A673 (cell line): ENCODE measurements at regions of chr11 and their contacts with region 1.

Region 1: DNA sequence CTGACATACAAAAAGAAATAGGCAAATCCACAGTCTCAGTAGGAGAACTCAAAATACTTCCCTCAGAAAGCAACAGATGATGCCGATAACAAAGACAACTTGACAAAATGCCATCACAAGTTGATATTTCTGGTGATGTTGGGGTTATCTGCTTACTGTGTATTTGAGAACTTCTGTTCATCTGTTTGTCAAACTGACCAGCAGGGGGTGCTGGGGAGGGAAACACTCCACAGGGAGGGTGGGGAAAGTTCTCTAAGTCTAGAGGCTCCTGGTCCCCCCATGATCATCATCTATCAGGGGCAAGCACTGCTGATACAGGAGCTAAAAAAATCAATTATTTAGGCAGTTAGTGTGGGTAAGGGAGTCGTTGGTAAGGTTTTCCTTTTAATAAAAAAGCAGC is 19.2 kb downstream of the GLYATL1 start:
- DNase-seq: peak; percentile 63
- H3K4me3 ChIP-seq: no peak overlapping the region
- H3K27ac ChIP-seq: no peak overlapping the region
- H3K4me1 ChIP-seq: no peaks in the 10 kb centered on the region
- H3K27me3 ChIP-seq: peaks cover 14% of the 10 kb centered on the region
- CTCF ChIP-seq: peak; percentile 62

Region 2: GRCh38 chr11:58726737-58727414 is 231.6 kb before region 1 on chr11:
- CTCF ChIA-PET with region 1: no interaction called
- POLR2A ChIA-PET with region 1: no interaction called
- intact Hi-C with region 1: no loop called
- DNase-seq: peak; percentile 35
- H3K4me3 ChIP-seq: no peak overlapping the region
- H3K27ac ChIP-seq: no peak overlapping the region
- H3K4me1 ChIP-seq: peaks cover 10% of the 10 kb centered on the region
- H3K27me3 ChIP-seq: no peaks in the 10 kb centered on the region
- CTCF ChIP-seq: no peak

Region 3: DNA sequence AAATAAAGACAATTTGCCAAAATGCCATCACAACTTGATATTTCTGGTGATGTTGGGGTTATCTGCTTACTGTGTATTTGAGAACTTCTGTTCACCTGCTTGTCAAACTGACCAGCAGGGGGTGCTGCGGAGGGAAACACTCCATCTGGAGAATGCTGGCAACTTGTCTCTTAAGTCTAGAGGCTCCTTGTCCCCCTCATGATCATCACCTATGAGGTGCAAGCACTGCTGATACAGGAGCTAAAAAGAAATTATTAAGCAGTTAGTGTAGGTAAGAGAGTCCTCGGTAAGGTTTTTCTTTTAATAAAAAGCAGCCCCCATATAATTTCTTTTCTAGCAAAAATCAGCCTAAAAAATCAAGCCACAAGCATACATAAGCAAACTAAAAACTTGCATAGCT is 94.9 kb after region 1 on chr11:
- CTCF ChIA-PET with region 1: no interaction called
- POLR2A ChIA-PET with region 1: no interaction called
- intact Hi-C with region 1: loop called (anchors 5 kb)
- DNase-seq: peak; percentile 77
- H3K4me3 ChIP-seq: no peak overlapping the region
- H3K27ac ChIP-seq: no peak overlapping the region
- H3K4me1 ChIP-seq: no peaks in the 10 kb centered on the region
- H3K27me3 ChIP-seq: peaks cover 23% of the 10 kb centered on the region
- CTCF ChIP-seq: peak; percentile 74